SK-N-SH (cell line): ENCODE measurements at regions of chr2 and their contacts with region 1.

Region 1: GRCh38 chr2:29923110-29923721 is 1.8 kb upstream of the ALK start:
- DNase-seq: peak; percentile 71
- H3K4me3 ChIP-seq: no peak overlapping the region; a peak in 1 of 4 replicates
- H3K27ac ChIP-seq: no peak overlapping the region; a peak in 1 of 4 replicates
- H3K4me1 ChIP-seq: peaks cover 0 to 11% of the 10 kb centered on the region in 2 experiments; a peak in 2 of 4 replicates
- H3K27me3 ChIP-seq: peaks cover 38% of the 10 kb centered on the region
- CTCF ChIP-seq: peak; percentile 99
- EP300 ChIP-seq: 0 out of 4 replicates have a peak, but pooled peaks of 1 of the 2 experiments have one; percentile 10
- RAD21 ChIP-seq: peak; percentile 99

Region 2: GRCh38 chr2:29262681-29263260 is 660.4 kb before region 1 on chr2:
- CTCF ChIA-PET with region 1: interaction called, 4 read pairs
- POLR2A ChIA-PET with region 1: interaction called, 21 read pairs
- DNase-seq: peak; percentile 79
- H3K4me3 ChIP-seq: no peak overlapping the region; a peak in 1 of 4 replicates
- H3K27ac ChIP-seq: peak overlapping the region; percentile 4 to 100; a peak in 3 of 4 replicates
- H3K4me1 ChIP-seq: peaks cover 0 to 58% of the 10 kb centered on the region in 2 experiments; a peak in 3 of 4 replicates
- H3K27me3 ChIP-seq: no peaks in the 10 kb centered on the region
- CTCF ChIP-seq: no peak
- EP300 ChIP-seq: peak in 1 of 2 experiments; percentile 98; a peak in 2 of 4 replicates
- RAD21 ChIP-seq: peak; percentile 33

Region 3: GRCh38 chr2:29611850-29612249 is 311.4 kb before region 1 on chr2:
- CTCF ChIA-PET with region 1: interaction called, 5 read pairs
- POLR2A ChIA-PET with region 1: interaction called, 27 read pairs
- DNase-seq: no peak
- H3K4me3 ChIP-seq: no peak overlapping the region
- H3K27ac ChIP-seq: peak overlapping the region in 1 of 2 experiments; percentile 99; a peak in 2 of 4 replicates
- H3K4me1 ChIP-seq: peaks cover 0 to 80% of the 10 kb centered on the region in 2 experiments; a peak in 2 of 4 replicates
- H3K27me3 ChIP-seq: no peaks in the 10 kb centered on the region
- CTCF ChIP-seq: no peak
- EP300 ChIP-seq: no peak
- RAD21 ChIP-seq: no peak

Region 4: GRCh38 chr2:29940706-29941105 is 17.5 kb after region 1 on chr2:
- CTCF ChIA-PET with region 1: interaction called, 82 read pairs
- POLR2A ChIA-PET with region 1: no interaction called
- DNase-seq: no peak
- H3K4me3 ChIP-seq: no peak overlapping the region
- H3K27ac ChIP-seq: no peak overlapping the region
- H3K4me1 ChIP-seq: no peaks in the 10 kb centered on the region
- H3K27me3 ChIP-seq: peaks cover 7% of the 10 kb centered on the region
- CTCF ChIP-seq: no peak
- EP300 ChIP-seq: no peak
- RAD21 ChIP-seq: no peak

Region 5: GRCh38 chr2:29983308-29983707 is 60.1 kb after region 1 on chr2:
- CTCF ChIA-PET with region 1: interaction called, 11 read pairs
- POLR2A ChIA-PET with region 1: no interaction called
- DNase-seq: no peak
- H3K4me3 ChIP-seq: no peak overlapping the region
- H3K27ac ChIP-seq: no peak overlapping the region
- H3K4me1 ChIP-seq: no peaks in the 10 kb centered on the region; a peak in 1 of 4 replicates
- H3K27me3 ChIP-seq: no peaks in the 10 kb centered on the region
- CTCF ChIP-seq: no peak
- EP300 ChIP-seq: no peak
- RAD21 ChIP-seq: no peak

Region 6: GRCh38 chr2:30072250-30072842 is 149.1 kb after region 1 on chr2:
- CTCF ChIA-PET with region 1: interaction called, 209 read pairs
- POLR2A ChIA-PET with region 1: interaction called, 4 read pairs
- DNase-seq: peak; percentile 82
- H3K4me3 ChIP-seq: no peak overlapping the region
- H3K27ac ChIP-seq: no peak overlapping the region
- H3K4me1 ChIP-seq: peaks cover 0 to 2% of the 10 kb centered on the region in 2 experiments; a peak in 1 of 4 replicates
- H3K27me3 ChIP-seq: peaks cover 6% of the 10 kb centered on the region; the same call in 1 of the 2 replicates
- CTCF ChIP-seq: peak; percentile 87
- EP300 ChIP-seq: no peak
- RAD21 ChIP-seq: peak; percentile 99